ENCODE measurements at regions of chr1 and their contacts with region 1.

Region 1: DNA sequence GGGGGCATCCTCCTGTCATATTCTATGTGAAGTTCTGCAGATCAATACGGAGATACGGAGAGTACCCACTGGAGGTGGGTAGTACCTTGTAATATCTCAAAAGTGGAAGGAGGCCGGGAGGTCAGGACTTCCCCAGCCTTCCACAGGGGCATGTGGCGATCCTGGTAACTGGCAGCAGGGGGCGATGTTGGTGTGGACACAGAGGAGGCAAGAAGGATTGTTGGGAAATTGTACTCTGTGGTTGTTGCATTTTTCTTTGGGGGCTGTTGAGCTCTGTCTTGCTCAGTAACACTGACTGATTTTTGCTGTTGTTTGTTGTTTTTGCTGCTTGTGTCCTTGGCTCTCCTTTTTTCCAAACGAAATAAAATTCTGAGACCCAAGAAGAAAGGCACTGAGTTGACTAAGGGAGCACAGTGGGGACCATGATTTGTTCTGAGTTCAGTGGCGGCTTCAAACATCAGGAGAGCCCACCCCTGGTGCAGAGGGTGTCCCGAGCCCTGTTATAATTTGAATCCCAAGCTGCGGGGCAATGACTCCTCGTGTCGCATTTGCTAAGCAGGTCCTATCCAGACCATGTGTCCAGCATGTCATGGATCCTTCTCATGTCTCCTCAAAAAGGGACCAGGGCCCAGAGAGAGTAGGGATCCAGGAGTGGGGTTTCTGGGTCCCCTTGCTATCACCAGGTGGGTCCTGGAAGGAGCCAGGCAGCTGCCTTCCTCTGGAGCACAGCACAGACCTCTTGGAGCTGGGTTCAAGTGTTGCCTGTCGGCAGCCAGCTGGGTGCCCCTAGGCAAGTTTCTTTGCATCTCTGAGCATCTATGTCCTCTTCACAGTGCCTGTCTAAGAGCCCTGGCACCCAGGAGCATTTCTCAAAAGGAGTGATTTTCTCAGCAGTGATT is 22.8 kb downstream of the LHX4 start:
- DNase-seq: peak; percentile 51
- ATAC-seq: peak; percentile 25; the same call in 2 of the 3 replicates
- H3K4me3 ChIP-seq: peak overlapping the region; percentile 11 to 65 (median 28); a peak in 3 of 6 replicates
- H3K27ac ChIP-seq: no peak overlapping the region
- H3K4me1 ChIP-seq: peaks cover 76% of the 10 kb centered on the region
- H3K27me3 ChIP-seq: peaks cover 0 to 10% of the 10 kb centered on the region in 2 experiments; a peak in 3 of 5 replicates
- CTCF ChIP-seq: peak; percentile 83
- EP300 ChIP-seq: no peak
- POLR2A ChIP-seq: no peak
- RAD21 ChIP-seq: peak; percentile 74; the same call in 1 of the 2 replicates

Region 2: GRCh38 chr1:180168786-180169639 is 83.9 kb before region 1 on chr1:
- CTCF ChIA-PET with region 1: no interaction called
- POLR2A ChIA-PET with region 1: no interaction called
- in situ Hi-C with region 1: no loop called
- intact Hi-C with region 1: no loop called
- DNase-seq: peak; percentile 43
- ATAC-seq: peak; percentile 94
- H3K4me3 ChIP-seq: no peak overlapping the region
- H3K27ac ChIP-seq: no peak overlapping the region
- H3K4me1 ChIP-seq: peaks cover 40% of the 10 kb centered on the region
- H3K27me3 ChIP-seq: no peaks in the 10 kb centered on the region
- CTCF ChIP-seq: peak; percentile 83
- EP300 ChIP-seq: no peak
- POLR2A ChIP-seq: no peak
- RAD21 ChIP-seq: peak; percentile 73

Region 3: DNA sequence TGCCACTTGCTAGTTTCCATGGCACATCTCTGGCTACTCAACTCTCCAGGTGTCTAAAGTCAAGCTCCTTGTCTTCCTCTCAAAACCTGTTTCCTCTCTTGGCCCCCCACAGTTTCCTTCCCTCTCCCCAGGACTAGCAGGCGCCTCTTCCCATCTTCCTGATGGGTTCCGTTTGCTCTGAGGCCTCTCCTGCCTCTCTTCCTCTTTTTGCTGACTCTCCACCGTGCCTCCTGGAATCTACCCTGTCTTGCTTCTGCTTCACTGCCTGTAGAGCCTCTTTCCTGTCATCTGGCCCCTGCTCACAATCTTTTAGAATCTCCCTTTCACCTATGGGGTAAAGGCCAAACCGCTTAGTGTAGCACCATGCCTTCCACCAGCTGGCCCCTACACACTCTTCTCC is 44.6 kb before region 1 on chr1:
- CTCF ChIA-PET with region 1: no interaction called
- POLR2A ChIA-PET with region 1: no interaction called
- in situ Hi-C with region 1: loop called (anchors 5 kb)
- intact Hi-C with region 1: no loop called
- DNase-seq: no peak
- ATAC-seq: no peak
- H3K4me3 ChIP-seq: no peak overlapping the region
- H3K27ac ChIP-seq: no peak overlapping the region
- H3K4me1 ChIP-seq: no peaks in the 10 kb centered on the region
- H3K27me3 ChIP-seq: peaks cover 0 to 8% of the 10 kb centered on the region in 2 experiments; a peak in 2 of 5 replicates
- CTCF ChIP-seq: no peak
- EP300 ChIP-seq: no peak
- POLR2A ChIP-seq: no peak
- RAD21 ChIP-seq: no peak

Region 4: DNA sequence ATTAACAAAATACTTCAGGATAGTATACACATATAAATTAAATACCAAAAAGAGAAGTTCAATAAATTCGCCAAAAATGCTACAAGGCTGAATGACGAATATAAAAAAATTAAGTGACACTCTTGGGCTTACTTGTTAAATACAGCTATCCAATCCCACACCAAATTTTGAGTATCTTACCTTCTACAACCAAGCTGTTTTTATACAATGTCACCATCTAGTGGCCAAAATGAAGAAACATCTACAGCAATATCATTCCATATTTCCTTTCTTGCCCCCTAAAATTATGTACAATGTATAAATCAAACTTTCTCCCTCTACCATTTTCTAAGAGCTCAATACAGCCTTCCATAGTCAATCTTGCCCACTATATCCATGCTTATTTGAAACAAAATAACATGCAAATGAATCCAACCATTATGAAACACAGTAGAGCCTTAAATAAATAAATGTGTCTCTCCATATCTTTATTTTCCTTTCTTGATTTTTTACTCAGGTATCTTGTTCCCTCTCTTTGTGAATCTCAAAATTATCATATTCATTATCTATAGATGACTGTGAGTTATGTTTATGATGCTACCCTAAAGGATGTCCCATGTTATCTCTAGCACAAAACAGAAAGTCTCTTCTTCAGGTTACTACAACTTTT is 163.2 kb after region 1 on chr1:
- CTCF ChIA-PET with region 1: interaction called, 17 read pairs
- POLR2A ChIA-PET with region 1: interaction called, 4 read pairs
- in situ Hi-C with region 1: loop called (anchors 5 kb)
- intact Hi-C with region 1: loop called (anchors 1 kb)
- DNase-seq: peak; percentile 28
- ATAC-seq: peak; percentile 47; the same call in 2 of the 3 replicates
- H3K4me3 ChIP-seq: no peak overlapping the region
- H3K27ac ChIP-seq: no peak overlapping the region
- H3K4me1 ChIP-seq: no peaks in the 10 kb centered on the region
- H3K27me3 ChIP-seq: no peaks in the 10 kb centered on the region
- CTCF ChIP-seq: peak; percentile 73
- EP300 ChIP-seq: no peak
- POLR2A ChIP-seq: no peak
- RAD21 ChIP-seq: peak; percentile 37; the same call in 1 of the 2 replicates

Region 5: DNA sequence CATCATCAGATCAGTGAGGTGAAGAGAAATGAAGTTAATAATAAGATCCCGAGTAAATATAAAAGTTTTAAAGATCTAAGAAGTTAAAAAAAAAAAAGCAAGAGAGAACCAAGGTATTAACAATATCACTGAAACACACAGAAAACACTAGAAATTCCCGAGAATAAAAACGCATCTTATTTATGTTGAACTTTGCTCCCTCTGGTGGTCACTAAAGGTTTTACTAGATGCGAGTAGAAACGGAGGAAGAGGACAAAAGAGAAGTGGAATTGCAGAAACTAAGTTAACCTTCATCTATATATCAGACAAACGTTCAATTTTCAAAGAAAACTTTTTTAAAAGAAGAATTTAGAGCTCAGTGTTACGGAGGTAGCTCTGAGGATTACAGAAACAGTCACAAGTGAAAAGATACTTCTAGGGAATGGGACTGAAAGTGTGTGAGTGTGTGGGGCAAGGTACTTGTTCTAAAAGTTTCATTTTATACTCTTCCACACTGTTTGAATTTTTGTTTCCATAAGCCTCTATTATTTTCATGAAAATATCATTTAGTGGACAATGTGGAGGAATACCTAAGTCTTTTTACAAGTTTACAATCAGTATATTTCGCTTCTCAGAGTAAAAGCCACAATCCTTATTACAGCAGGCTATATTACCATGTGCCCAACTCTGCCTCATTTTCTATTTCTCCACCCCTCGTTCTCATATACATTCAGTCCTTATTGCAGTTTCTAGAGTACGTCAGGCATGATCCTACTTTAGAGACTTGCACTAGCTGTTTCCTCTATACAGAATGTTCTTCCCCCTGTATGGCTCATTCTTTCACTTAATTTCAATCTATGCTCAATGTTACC is 229.8 kb after region 1 on chr1:
- CTCF ChIA-PET with region 1: interaction called, 10 read pairs
- POLR2A ChIA-PET with region 1: no interaction called
- in situ Hi-C with region 1: loop called (anchors 5 kb)
- intact Hi-C with region 1: loop called (anchors 5 kb)
- DNase-seq: peak; percentile 51
- ATAC-seq: no peak
- H3K4me3 ChIP-seq: no peak overlapping the region
- H3K27ac ChIP-seq: no peak overlapping the region
- H3K4me1 ChIP-seq: 0 out of 2 replicates have a peak, but pooled peaks cover 5% of the 10 kb centered on the region
- H3K27me3 ChIP-seq: no peaks in the 10 kb centered on the region
- CTCF ChIP-seq: peak; percentile 60
- EP300 ChIP-seq: no peak
- POLR2A ChIP-seq: no peak
- RAD21 ChIP-seq: no peak